ENCODE measurements at regions of chr6 and their contacts with region 1.

Region 1: GRCh38 chr6:12423832-12424231 is 133.7 kb downstream of the EDN1 start:
- DNase-seq: no peak
- H3K4me3 ChIP-seq: no peak overlapping the region
- H3K27ac ChIP-seq: no peak overlapping the region
- H3K4me1 ChIP-seq: no peaks in the 10 kb centered on the region
- H3K27me3 ChIP-seq: no peaks in the 10 kb centered on the region
- CTCF ChIP-seq: no peak
- EP300 ChIP-seq: no peak
- POLR2A ChIP-seq: no peak

Region 2: DNA sequence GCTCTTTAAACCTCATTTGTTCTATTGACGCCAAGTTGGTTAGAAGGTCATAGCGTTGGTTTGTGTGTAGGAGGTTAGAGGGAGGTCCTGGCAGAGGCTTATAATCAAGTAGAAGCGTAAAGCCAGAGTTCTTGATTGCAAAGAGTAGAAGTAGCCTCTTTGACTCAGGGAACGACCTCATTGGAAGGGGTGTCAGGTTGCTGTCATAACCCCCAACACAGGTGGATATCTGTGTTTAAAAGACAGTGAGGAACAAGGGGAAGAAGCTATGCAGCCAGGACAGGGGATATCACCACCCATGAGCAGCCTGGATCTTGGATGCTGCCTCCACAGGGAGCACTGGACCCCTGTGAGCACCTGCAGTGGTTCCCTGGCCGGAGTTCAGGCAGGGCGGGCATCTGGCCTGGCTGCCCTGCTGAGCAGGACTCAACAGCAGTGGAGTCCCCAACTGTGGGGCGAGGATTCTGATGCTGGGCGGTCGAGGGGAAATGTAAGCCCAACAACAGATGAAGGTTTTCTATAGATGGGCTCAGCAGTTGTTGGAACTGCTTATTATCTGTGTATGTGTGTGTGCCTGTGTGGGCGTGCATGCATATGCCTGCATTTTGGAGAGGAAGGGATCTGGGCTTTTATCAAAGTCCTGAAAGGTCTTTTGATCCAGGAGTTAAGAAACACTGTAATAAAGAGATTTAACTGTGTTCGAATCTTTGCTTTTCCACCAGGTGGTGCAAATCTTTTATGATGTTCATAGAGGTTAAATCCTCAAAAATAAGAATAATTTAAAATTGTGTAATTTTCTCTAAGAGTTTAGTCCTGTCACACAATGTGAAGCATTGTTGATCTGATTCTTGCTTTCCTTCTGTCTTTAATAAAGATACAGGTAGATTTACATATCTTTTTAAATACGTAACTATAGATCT is 384.0 kb before region 1 on chr6:
- intact Hi-C with region 1: no loop called
- DNase-seq: no peak
- H3K4me3 ChIP-seq: no peak overlapping the region
- H3K27ac ChIP-seq: no peak overlapping the region
- H3K4me1 ChIP-seq: no peaks in the 10 kb centered on the region
- H3K27me3 ChIP-seq: no peaks in the 10 kb centered on the region
- CTCF ChIP-seq: no peak
- EP300 ChIP-seq: no peak
- POLR2A ChIP-seq: no peak

Region 3: GRCh38 chr6:12408752-12409151 is 15.1 kb before region 1 on chr6:
- intact Hi-C with region 1: loop called in 1 of 4 experiments (anchors 2 kb)
- DNase-seq: no peak
- H3K4me3 ChIP-seq: no peak overlapping the region
- H3K27ac ChIP-seq: no peak overlapping the region
- H3K4me1 ChIP-seq: no peaks in the 10 kb centered on the region
- H3K27me3 ChIP-seq: no peaks in the 10 kb centered on the region
- CTCF ChIP-seq: no peak
- EP300 ChIP-seq: no peak
- POLR2A ChIP-seq: no peak

Region 4: DNA sequence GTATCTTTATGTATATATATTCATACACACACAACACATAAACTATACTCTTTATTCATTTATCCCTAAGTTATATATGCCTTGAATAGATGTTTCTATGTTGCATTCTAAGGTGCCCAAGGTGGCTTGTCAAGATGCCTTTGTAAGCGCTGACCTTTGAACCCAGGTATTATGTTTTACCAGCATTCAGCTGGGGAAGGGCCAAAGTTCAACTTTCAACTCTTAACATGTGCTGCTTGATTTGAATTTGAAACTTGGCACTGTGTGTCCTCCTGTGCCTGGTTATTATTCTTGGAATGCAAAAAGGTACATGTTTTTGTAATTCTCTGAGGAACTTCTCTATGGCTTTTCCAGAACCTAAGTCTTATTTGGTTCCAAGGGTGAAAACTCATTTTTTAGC is 12.9 kb after region 1 on chr6:
- intact Hi-C with region 1: loop called in 1 of 4 experiments (anchors 1 kb)
- DNase-seq: no peak
- H3K4me3 ChIP-seq: no peak overlapping the region
- H3K27ac ChIP-seq: no peak overlapping the region
- H3K4me1 ChIP-seq: no peaks in the 10 kb centered on the region
- H3K27me3 ChIP-seq: no peaks in the 10 kb centered on the region
- CTCF ChIP-seq: no peak
- EP300 ChIP-seq: no peak
- POLR2A ChIP-seq: no peak